ENCODE measurements at regions of chr6 and their contacts with region 1.

Region 1: DNA sequence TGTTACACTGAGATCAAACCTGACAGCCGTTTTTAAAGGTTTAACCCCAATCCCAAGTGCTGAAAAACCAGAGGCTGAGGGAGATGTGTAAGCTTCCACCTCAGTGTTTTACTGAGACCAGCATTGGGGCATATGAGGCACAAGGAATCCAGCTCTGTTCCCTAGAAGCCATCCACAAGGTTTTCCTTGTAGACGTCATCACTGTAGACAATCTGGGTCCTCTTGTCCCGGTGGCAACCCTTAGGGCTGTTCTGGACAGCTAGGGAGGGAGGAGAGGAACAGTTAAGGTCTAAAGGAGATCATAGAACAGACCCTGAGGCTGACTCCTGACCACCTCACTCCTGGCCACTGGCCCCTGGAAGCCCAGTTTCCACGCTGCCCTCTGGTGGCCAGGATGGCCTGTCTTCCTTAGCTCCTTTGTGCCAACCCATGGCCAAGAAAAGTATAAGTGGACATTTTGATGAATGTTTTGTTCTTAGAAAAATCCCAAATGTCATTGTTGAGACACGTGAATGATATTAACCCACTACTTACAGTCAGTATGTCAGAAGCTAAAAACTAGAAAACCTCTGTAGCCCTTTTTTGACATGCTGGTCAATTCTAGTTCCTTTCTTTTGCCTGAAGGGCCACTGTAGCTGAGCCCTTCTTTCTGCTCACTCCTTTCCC is 6.4 kb downstream of the CFB start:
- DNase-seq: peak; percentile 66 to 79
- ATAC-seq: peak; percentile 68 to 86 (median 72)
- H3K4me3 ChIP-seq: no peak overlapping the region
- H3K27ac ChIP-seq: no peak overlapping the region
- H3K4me1 ChIP-seq: peaks cover 1% of the 10 kb centered on the region
- H3K27me3 ChIP-seq: no peaks in the 10 kb centered on the region
- CTCF ChIP-seq: peak; percentile 72

Region 2: DNA sequence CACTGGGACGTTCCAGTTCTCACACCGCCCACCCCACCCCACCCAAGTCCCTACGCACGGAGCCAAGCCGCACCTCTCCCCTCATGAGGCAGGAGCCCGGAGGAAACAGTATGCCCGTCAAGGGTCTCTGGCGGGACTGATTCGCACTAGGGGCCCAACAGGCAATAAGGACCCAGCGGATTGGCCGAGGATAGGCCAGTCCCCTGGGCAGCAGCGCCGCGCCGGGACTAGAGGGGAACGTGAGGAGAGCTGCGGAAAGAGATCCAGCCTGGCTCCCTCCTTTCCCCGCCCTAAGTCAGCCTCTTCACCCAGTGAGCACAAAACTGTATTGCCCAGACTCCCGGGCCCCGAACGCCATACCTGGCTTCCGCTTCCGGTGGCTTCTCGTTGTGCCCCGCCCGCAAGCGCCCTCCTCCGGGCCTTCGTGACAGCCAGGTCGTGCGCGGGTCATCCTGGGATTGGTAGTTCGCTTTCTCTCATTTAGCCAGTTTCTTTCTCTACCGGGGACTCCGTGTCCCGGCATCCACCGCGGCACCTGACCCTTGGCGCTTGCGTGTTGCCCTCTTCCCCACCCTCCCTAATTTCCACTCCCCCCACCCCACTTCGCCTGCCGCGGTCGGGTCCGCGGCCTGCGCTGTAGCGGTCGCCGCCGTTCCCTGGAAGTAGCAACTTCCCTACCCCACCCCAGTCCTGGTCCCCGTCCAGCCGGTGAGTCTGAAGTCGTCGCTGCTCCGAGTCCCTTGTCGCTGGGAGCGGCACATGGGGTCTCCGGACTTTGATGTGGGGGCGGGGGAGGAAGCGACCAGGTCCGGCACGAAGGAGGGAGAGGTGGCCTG is 286.6 kb before region 1 on chr6 and contains the start of gene CSNK2B:
- intact Hi-C with region 1: loop called in 1 of 2 experiments (anchors 5 kb)
- DNase-seq: peak; percentile 99
- ATAC-seq: peak; percentile 89 to 92 (median 91)
- H3K4me3 ChIP-seq: peak within 1 kb of the TSS; percentile 91
- H3K27ac ChIP-seq: peak within 1 kb of the TSS; percentile 97
- H3K4me1 ChIP-seq: peaks cover 41% of the 10 kb centered on the region
- H3K27me3 ChIP-seq: no peaks in the 10 kb centered on the region
- CTCF ChIP-seq: no peak
- total RNA-seq, gene CSNK2B: 102 to 129 (median 103) TPM

Region 3: DNA sequence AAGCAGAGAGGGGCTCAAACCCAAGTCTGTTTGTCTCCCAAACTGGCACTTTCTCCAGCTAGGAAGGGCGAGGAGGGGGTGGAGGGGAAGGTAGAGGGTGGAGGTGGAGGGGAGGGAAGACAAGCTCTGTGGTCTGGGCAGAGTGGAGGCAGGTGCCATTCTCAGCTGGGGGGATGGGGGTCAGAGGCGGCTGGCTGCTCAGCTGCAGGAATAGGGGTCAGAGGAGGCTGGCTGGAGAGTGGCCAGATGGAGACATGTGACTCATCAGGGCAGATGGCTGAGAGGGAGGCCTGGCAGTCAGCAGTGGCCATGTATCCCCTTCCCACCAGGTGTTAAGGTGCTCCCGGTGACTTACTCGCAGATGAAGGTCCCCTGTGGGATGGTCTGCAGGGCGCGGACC is 69.9 kb before region 1 on chr6:
- intact Hi-C with region 1: no loop called
- DNase-seq: no peak
- ATAC-seq: peak in 2 of 4 donors; percentile 49 to 55
- H3K4me3 ChIP-seq: no peak overlapping the region
- H3K27ac ChIP-seq: no peak overlapping the region
- H3K4me1 ChIP-seq: no peaks in the 10 kb centered on the region
- H3K27me3 ChIP-seq: no peaks in the 10 kb centered on the region
- CTCF ChIP-seq: no peak

Region 4: GRCh38 chr6:31901953-31902643 is 50.2 kb before region 1 on chr6 and contains the start of gene ZBTB12:
- intact Hi-C with region 1: loop called (anchors 2 to 5 kb)
- DNase-seq: peak; percentile 91 to 93
- ATAC-seq: peak; percentile 75 to 81 (median 78)
- H3K4me3 ChIP-seq: peak within 1 kb of the TSS; percentile 75
- H3K27ac ChIP-seq: peak within 1 kb of the TSS; percentile 75
- H3K4me1 ChIP-seq: peaks cover 19% of the 10 kb centered on the region
- H3K27me3 ChIP-seq: no peaks in the 10 kb centered on the region
- CTCF ChIP-seq: no peak
- total RNA-seq, gene ZBTB12: 1.1 to 2.6 (median 1.8) TPM

Measured in psoas muscle (tissue), 8 donors.